ENCODE measurements at regions of chr11 and their contacts with region 1.

Region 1: GRCh38 chr11:34512840-34513681 is 533 bp downstream of the ELF5 start:
- DNase-seq: peak; percentile 53
- H3K27ac ChIP-seq: no peak overlapping the region
- CTCF ChIP-seq: peak; percentile 65

Region 2: DNA sequence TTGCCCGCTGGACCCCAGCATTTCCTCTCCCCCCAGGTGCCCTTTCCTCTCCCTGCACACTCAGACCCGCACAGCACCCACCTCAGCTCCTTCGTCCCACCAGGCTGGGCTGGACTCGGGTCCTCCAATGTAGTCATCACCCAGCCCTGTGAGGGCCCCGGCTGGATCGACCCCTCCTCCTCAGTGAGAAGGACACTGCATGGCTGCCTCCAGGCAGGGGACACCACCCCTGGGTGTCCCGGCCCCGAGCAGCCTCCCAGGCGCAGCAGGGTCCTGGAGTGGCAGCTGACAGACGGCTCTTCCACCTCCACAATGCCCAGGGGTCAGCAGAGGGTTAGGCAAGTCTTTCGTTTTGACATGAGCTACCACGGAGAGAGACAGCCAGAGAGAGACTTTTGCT is 11.6 kb after region 1 on chr11:
- CTCF ChIA-PET with region 1: interaction called, 10 read pairs
- POLR2A ChIA-PET with region 1: no interaction called
- DNase-seq: no peak
- H3K27ac ChIP-seq: no peak overlapping the region
- CTCF ChIP-seq: no peak